ENCODE measurements at regions of chr6 and their contacts with region 1.

Region 1: DNA sequence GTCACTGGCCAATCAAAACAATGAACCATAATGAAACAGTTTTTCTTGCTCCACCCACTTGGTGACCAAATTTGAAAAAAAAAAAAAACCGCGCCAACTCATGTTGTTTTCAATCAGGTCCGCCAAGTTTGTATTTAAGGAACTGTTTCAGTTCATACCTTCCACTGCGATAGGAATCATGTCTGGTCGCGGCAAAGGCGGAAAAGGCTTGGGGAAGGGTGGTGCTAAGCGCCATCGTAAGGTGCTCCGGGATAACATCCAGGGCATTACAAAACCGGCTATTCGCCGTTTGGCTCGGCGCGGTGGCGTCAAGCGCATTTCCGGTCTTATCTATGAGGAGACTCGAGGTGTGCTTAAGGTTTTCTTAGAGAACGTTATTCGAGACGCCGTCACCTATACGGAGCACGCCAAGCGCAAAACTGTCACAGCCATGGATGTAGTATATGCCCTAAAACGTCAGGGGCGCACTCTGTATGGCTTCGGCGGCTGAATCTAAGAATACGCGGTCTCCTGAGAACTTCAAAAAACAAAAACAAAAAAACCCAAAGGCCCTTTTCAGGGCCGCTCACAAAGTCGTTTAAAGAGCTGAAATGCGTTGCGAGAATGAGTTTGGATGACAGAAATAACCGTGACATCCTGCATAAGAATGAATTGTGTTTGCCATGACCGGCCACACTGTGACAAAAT is 16.7 kb downstream of the HFE start:
- DNase-seq: peak; percentile 93 to 96 (median 94)
- H3K4me3 ChIP-seq: peak overlapping the region; percentile 36 to 39
- H3K4me3 Mint-ChIP-seq: peak overlapping the region; percentile 84 to 96 (median 92)
- H3K27ac ChIP-seq: peak overlapping the region; percentile 66
- H3K27ac Mint-ChIP-seq: peak overlapping the region; percentile 96 to 100 (median 99)
- H3K4me1 ChIP-seq: peaks cover 17% of the 10 kb centered on the region
- H3K4me1 Mint-ChIP-seq: peaks cover 11 to 19% (median 15%) of the 10 kb centered on the region in 4 donors
- H3K27me3 ChIP-seq: no peaks in the 10 kb centered on the region
- H3K27me3 Mint-ChIP-seq: peaks cover 2 to 6% of the 10 kb centered on the region in 2 donors

Region 2: DNA sequence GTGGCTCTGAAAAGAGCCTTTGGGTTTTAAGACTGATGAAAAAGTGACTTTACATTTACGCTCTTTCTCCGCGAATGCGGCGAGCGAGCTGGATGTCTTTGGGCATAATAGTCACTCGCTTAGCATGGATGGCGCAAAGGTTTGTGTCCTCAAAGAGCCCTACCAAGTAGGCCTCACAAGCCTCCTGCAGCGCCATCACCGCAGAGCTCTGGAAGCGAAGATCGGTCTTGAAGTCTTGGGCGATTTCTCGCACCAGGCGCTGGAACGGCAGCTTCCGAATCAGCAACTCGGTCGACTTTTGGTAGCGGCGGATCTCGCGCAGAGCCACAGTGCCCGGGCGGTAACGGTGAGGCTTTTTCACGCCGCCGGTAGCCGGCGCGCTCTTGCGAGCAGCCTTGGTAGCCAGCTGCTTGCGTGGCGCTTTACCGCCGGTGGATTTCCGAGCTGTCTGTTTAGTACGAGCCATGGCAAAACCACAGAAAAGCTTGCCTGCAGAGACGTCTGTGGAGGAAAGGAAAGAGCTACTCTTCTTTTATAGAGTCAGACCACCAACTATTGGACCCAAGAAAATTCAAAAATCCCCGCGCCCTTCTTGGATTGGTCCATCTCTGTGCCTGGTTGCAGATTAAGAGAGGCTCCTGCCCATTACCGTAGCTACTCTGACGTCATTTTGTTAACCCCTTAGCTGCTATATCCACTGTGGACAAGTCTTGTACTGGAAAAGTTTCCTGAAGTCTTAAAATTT is 72.1 kb before region 1 on chr6:
- CTCF ChIA-PET with region 1: interaction called, 6 read pairs
- POLR2A ChIA-PET with region 1: interaction called, 29 read pairs
- intact Hi-C with region 1: loop called (anchors 2 kb)
- DNase-seq: peak; percentile 86 to 94 (median 89)
- H3K4me3 ChIP-seq: peak overlapping the region; percentile 53 to 67
- H3K4me3 Mint-ChIP-seq: peak overlapping the region; percentile 91 to 99 (median 94)
- H3K27ac ChIP-seq: peak overlapping the region; percentile 71
- H3K27ac Mint-ChIP-seq: peak overlapping the region; percentile 89 to 98 (median 96)
- H3K4me1 ChIP-seq: peaks cover 35% of the 10 kb centered on the region
- H3K4me1 Mint-ChIP-seq: peaks cover 33 to 54% (median 44%) of the 10 kb centered on the region in 4 donors
- H3K27me3 ChIP-seq: no peaks in the 10 kb centered on the region
- H3K27me3 Mint-ChIP-seq: peaks cover 0 to 3% of the 10 kb centered on the region in 2 donors

Region 3: GRCh38 chr6:26065952-26066380 is 37.9 kb before region 1 on chr6:
- CTCF ChIA-PET with region 1: interaction called, 533 read pairs
- POLR2A ChIA-PET with region 1: interaction called, 86 read pairs
- intact Hi-C with region 1: no loop called
- DNase-seq: peak; percentile 70 to 76 (median 71)
- H3K4me3 ChIP-seq: no peak overlapping the region
- H3K4me3 Mint-ChIP-seq: no peak overlapping the region
- H3K27ac ChIP-seq: no peak overlapping the region
- H3K27ac Mint-ChIP-seq: peak overlapping the region in 1 of 7 donors; percentile 30
- H3K4me1 ChIP-seq: no peaks in the 10 kb centered on the region
- H3K4me1 Mint-ChIP-seq: peaks cover 4 to 12% (median 7%) of the 10 kb centered on the region in 4 donors
- H3K27me3 ChIP-seq: no peaks in the 10 kb centered on the region
- H3K27me3 Mint-ChIP-seq: peaks cover 0 to 4% of the 10 kb centered on the region in 2 donors

Region 4: DNA sequence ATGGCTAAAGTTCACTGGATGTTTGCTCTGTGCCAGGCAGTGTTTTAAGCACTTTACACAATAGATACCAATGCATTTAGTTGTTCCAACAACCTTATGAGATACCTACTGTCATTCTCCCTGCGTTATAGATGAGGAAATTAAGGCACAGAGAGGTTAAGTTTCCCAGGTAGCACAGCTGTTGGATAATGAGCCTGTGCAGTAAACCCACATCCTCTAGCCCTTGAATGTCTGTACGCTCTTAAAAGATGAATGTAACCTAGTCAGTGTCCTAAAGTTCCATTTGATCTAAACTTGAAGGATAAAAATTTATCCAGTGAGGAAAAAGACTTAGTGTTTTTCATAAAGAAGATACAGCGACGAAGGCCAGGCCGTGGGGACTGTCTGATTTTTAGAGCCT is 11.3 kb after region 1 on chr6:
- CTCF ChIA-PET with region 1: interaction called, 6 read pairs
- POLR2A ChIA-PET with region 1: interaction called, 23 read pairs
- intact Hi-C with region 1: no loop called
- DNase-seq: no peak
- H3K4me3 ChIP-seq: no peak overlapping the region
- H3K4me3 Mint-ChIP-seq: no peak overlapping the region
- H3K27ac ChIP-seq: no peak overlapping the region
- H3K27ac Mint-ChIP-seq: no peak overlapping the region
- H3K4me1 ChIP-seq: no peaks in the 10 kb centered on the region
- H3K4me1 Mint-ChIP-seq: no peaks in the 10 kb centered on the region
- H3K27me3 ChIP-seq: no peaks in the 10 kb centered on the region
- H3K27me3 Mint-ChIP-seq: peaks cover 0 to 2% of the 10 kb centered on the region in 2 donors

Region 5: GRCh38 chr6:26183581-26184366 is 79.9 kb after region 1 on chr6:
- CTCF ChIA-PET with region 1: interaction called, 4 read pairs
- POLR2A ChIA-PET with region 1: interaction called, 21 read pairs
- intact Hi-C with region 1: loop called (anchors 2 kb)
- DNase-seq: peak; percentile 72 to 81 (median 79)
- H3K4me3 ChIP-seq: peak overlapping the region; percentile 2 to 69
- H3K4me3 Mint-ChIP-seq: peak overlapping the region; percentile 90 to 100 (median 96)
- H3K27ac ChIP-seq: peak overlapping the region; percentile 67
- H3K27ac Mint-ChIP-seq: peak overlapping the region; percentile 78 to 99 (median 95)
- H3K4me1 ChIP-seq: peaks cover 45% of the 10 kb centered on the region
- H3K4me1 Mint-ChIP-seq: peaks cover 29 to 54% (median 37%) of the 10 kb centered on the region in 4 donors
- H3K27me3 ChIP-seq: no peaks in the 10 kb centered on the region
- H3K27me3 Mint-ChIP-seq: no peaks in the 10 kb centered on the region

Region 6: GRCh38 chr6:26204332-26205165 is 100.6 kb after region 1 on chr6:
- CTCF ChIA-PET with region 1: no interaction called
- POLR2A ChIA-PET with region 1: interaction called, 74 read pairs
- intact Hi-C with region 1: loop called (anchors 2 kb)
- DNase-seq: peak; percentile 85 to 95 (median 89)
- H3K4me3 ChIP-seq: peak overlapping the region; percentile 48 to 87
- H3K4me3 Mint-ChIP-seq: no peak overlapping the region
- H3K27ac ChIP-seq: peak overlapping the region; percentile 82
- H3K27ac Mint-ChIP-seq: no peak overlapping the region
- H3K4me1 ChIP-seq: peaks cover 39% of the 10 kb centered on the region
- H3K4me1 Mint-ChIP-seq: peaks cover 8 to 26% (median 13%) of the 10 kb centered on the region in 4 donors
- H3K27me3 ChIP-seq: no peaks in the 10 kb centered on the region
- H3K27me3 Mint-ChIP-seq: peaks cover 0 to 3% of the 10 kb centered on the region in 2 donors